ENCODE measurements at regions of chr11 and their contacts with region 1.

Region 1: GRCh38 chr11:14519917-14520746 is at the start of gene PSMA1:
- DNase-seq: peak; percentile 83 to 86
- H3K4me3 ChIP-seq: peak within 1 kb of the TSS; percentile 98
- H3K27ac ChIP-seq: peak within 1 kb of the TSS; percentile 93
- H3K4me1 ChIP-seq: no peaks in the 10 kb centered on the region; the same call in 1 of the 2 replicates
- H3K27me3 ChIP-seq: no peaks in the 10 kb centered on the region
- CTCF ChIP-seq: peak; percentile 26; the same call in 1 of the 2 replicates
- total RNA-seq, gene PSMA1: 92.2 and 143 TPM in 2 replicates

Region 2: DNA sequence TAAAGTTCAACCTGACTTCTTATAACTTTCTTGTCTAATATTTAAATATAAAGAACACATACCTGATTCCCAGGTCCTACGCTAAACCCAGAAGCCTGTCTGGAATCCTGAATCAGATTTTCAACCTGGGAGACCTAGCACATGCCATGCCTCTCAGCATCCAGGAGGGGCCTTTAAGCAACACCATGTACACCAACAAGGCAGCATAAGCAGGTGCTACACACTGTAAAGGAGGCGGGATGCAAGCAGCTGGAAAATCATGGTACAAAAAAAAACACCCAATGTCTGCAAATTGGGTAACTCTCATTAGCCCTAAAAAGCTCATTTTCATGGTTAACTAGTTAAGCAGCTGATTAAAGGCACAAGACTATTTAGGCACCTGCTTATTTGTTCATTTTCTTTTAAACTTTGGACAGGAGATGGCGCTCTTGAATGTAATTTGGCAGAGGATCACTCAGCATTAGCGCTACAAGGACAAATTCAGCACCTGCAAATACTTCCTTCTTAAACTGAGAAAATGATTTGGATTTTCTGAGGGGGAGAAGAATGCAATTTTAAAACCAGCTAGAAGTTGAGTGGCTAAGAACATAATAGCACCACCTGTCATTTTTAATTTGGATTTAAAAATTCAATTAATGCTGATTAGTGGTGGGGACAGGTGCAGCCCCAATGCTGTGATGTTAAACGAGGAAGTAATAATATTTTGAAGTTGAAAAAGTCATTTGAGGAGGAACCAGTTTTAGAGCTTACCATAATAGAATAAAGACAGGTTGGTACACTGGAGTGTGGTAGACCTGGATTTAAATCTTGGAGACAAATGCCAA is 747.7 kb before region 1 on chr11:
- CTCF ChIA-PET with region 1: no interaction called
- POLR2A ChIA-PET with region 1: no interaction called
- intact Hi-C with region 1: no loop called
- DNase-seq: peak; percentile 12 to 68
- H3K4me3 ChIP-seq: no peak overlapping the region
- H3K27ac ChIP-seq: no peak overlapping the region
- H3K4me1 ChIP-seq: no peaks in the 10 kb centered on the region
- H3K27me3 ChIP-seq: no peaks in the 10 kb centered on the region
- CTCF ChIP-seq: peak; percentile 74

Region 3: GRCh38 chr11:14318581-14318981 is 201.6 kb before region 1 on chr11:
- CTCF ChIA-PET with region 1: no interaction called
- POLR2A ChIA-PET with region 1: interaction called, 18 read pairs
- intact Hi-C with region 1: no loop called
- DNase-seq: peak in 1 of 2 experiments; percentile 35
- H3K4me3 ChIP-seq: no peak overlapping the region
- H3K27ac ChIP-seq: 0 out of 2 replicates have a peak overlapping the region, but pooled peaks have one; percentile 29
- H3K4me1 ChIP-seq: peaks cover 10% of the 10 kb centered on the region; the same call in 1 of the 2 replicates
- H3K27me3 ChIP-seq: no peaks in the 10 kb centered on the region
- CTCF ChIP-seq: no peak

Region 4: DNA sequence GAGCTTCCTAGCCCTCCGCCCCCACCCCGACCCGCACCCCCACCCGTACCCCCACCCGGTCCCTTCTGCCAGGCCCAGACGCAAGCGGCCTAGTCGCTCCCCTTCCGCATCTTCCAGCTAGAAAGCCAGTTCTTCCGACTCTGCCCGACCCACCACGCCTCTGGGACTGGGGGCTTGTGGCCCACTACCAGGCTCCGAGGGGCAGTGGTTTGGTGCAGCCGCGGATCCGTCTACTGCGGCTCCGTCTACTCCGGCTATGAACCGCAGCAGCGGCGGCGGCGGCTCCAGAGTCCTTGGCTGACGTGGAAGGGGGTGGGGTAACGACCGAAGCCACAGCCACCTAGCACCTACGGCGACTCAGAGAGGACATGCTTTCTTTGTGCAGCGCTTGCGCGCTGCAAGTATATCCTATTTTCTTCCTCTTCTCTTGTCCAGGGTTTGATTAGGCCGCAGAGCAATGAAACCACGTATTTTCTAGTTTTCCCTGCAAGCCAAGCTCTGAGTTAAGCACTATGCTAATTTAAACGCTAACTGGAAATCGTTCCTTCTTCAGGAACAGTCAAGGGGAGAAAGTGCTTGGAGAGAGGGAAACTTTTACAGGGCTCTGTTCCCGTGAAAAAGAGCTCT is 20.5 kb before region 1 on chr11 and contains the start of gene COPB1:
- CTCF ChIA-PET with region 1: no interaction called
- POLR2A ChIA-PET with region 1: no interaction called
- intact Hi-C with region 1: loop called (anchors 2 kb)
- DNase-seq: peak; percentile 60 to 79
- H3K4me3 ChIP-seq: peak within 1 kb of the TSS; percentile 69
- H3K27ac ChIP-seq: peak within 1 kb of the TSS; percentile 58
- H3K4me1 ChIP-seq: peaks cover 11% of the 10 kb centered on the region; the same call in 1 of the 2 replicates
- H3K27me3 ChIP-seq: no peaks in the 10 kb centered on the region
- CTCF ChIP-seq: no peak
- total RNA-seq, gene COPB1: 82.4 and 82.8 TPM in 2 replicates

Region 5: DNA sequence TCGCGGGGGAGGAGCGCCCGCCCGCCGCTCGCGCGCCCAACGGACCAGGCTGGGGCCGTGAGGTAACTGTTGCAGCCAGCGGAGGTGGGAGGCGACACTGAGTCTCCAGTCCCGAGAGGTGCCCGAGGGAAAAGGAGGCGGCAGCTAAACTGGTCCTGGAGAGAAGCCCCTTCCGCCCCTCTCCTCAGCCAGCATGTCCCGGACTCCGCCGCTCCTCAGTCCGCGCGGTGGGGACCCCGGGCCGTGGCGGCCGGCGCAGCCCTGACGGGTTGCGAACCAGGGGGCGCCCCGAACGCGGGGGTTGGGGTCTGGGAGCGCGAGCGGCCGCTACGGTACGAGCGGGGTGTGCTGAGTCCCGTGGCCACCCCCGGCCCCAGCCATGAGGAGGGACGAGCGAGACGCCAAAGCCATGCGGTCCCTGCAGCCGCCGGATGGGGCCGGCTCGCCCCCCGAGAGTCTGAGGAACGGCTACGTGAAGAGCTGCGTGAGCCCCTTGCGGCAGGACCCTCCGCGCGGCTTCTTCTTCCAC is 123.6 kb after region 1 on chr11 and contains the start of gene PDE3B:
- CTCF ChIA-PET with region 1: no interaction called
- POLR2A ChIA-PET with region 1: no interaction called
- intact Hi-C with region 1: no loop called
- DNase-seq: peak in 1 of 2 experiments; percentile 47
- H3K4me3 ChIP-seq: peak within 1 kb of the TSS; percentile 75
- H3K27ac ChIP-seq: no peak within 1 kb of the TSS
- H3K4me1 ChIP-seq: no peaks in the 10 kb centered on the region
- H3K27me3 ChIP-seq: peaks cover 13% of the 10 kb centered on the region
- CTCF ChIP-seq: no peak
- total RNA-seq, gene PDE3B: not detected in 2 replicates

Region 6: GRCh38 chr11:14892036-14892567 is 372.0 kb after region 1 on chr11 and contains the start of gene CYP2R1:
- CTCF ChIA-PET with region 1: no interaction called
- POLR2A ChIA-PET with region 1: no interaction called
- intact Hi-C with region 1: loop called (anchors 5 kb)
- DNase-seq: peak; percentile 90 to 91
- H3K4me3 ChIP-seq: peak within 1 kb of the TSS; percentile 97
- H3K27ac ChIP-seq: peak within 1 kb of the TSS; percentile 79
- H3K4me1 ChIP-seq: peaks cover 10% of the 10 kb centered on the region
- H3K27me3 ChIP-seq: no peaks in the 10 kb centered on the region
- CTCF ChIP-seq: no peak
- total RNA-seq, gene CYP2R1: 7.1 and 7.2 TPM in 2 replicates

Measured in PC-9 (cell line).